ENCODE measurements at regions of chr16 and their contacts with region 1.

Region 1: GRCh38 chr16:27972500-27972899 is 91.0 kb downstream of the GSG1L start:
- DNase-seq: no peak
- ATAC-seq: peak; percentile 43 to 80

Region 2: DNA sequence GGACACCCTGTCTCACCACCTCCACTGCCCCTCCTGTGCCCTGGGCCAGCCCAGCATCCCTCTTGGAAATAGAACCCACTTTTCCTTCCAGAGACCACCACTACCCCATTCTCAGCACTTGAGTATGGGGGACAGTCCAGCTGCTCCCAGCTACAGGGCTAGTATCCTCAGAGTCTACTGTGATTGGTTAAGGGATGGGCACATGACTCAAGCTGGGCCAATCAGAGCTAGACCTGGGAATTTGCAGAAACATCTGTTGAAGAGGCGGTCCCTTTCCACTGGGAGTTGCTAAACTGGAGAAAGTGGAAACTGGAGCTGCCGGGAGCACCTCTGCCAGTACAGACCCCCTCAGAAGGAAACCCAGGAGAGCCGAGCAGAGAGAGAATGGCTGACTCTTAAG is 65.6 kb before region 1 on chr16:
- intact Hi-C with region 1: no loop called
- DNase-seq: no peak
- ATAC-seq: no peak

Region 3: GRCh38 chr16:28069971-28070794 is 97.7 kb after region 1 on chr16:
- intact Hi-C with region 1: loop called (anchors 2 to 5 kb)
- DNase-seq: no peak
- ATAC-seq: no peak

Measured in left cardiac atrium (tissue), 4 donors.